WTC11 (cell line): ENCODE measurements at regions of chr17 and their contacts with region 1.

Region 1: DNA sequence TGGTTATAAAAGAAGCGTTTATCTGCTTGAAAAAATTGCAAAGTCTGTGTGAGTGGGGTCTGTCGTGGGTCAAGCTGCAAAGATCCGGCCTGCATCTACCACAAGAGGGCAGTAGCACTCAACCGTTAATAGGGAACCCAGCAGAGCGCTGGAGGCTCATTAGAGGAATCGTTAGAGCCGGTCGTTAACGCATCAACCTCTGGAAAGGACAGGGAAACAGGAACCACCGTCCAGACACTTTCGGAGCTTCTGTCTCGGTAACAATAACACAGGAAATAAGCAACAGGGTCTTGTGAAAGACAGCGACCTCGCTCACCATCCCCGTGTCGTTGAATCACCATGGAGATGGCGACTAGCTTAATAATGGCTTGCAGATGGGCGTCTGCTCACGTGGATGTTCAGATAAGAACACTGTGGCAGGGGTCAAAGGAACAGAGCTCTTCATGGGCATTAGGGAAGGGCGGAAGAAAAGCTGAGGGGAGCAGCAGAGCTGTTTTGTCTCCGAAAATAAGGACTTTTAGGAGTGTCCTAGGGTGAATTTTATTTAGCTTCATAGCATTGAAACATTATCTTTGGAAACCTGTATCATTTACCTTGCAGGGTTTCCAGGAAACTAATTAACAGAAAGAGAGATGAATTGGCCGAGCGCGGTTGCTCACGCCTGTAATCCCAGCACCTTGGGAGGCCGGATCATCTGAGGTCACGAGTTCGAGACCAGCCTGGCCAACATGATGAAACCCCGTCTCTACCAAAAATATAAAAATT is 11.9 kb upstream of the NSRP1 start:
- DNase-seq: peak; percentile 78
- ATAC-seq: peak; percentile 96
- H3K4me3 Mint-ChIP-seq: peak overlapping the region; percentile 72
- H3K27ac Mint-ChIP-seq: peak overlapping the region; percentile 79
- H3K4me1 Mint-ChIP-seq: peaks cover 5% of the 10 kb centered on the region; the same call in 1 of the 2 replicates
- H3K27me3 Mint-ChIP-seq: no peaks in the 10 kb centered on the region
- CTCF ChIP-seq: peak; percentile 61

Region 2: GRCh38 chr17:29883497-29883896 is 221.3 kb before region 1 on chr17:
- CTCF ChIA-PET with region 1: no interaction called
- POLR2A ChIA-PET with region 1: no interaction called
- DNase-seq: no peak
- ATAC-seq: no peak
- H3K4me3 Mint-ChIP-seq: no peak overlapping the region
- H3K27ac Mint-ChIP-seq: no peak overlapping the region
- H3K4me1 Mint-ChIP-seq: peaks cover 4% of the 10 kb centered on the region; the same call in 1 of the 2 replicates
- H3K27me3 Mint-ChIP-seq: no peaks in the 10 kb centered on the region
- CTCF ChIP-seq: no peak

Region 3: DNA sequence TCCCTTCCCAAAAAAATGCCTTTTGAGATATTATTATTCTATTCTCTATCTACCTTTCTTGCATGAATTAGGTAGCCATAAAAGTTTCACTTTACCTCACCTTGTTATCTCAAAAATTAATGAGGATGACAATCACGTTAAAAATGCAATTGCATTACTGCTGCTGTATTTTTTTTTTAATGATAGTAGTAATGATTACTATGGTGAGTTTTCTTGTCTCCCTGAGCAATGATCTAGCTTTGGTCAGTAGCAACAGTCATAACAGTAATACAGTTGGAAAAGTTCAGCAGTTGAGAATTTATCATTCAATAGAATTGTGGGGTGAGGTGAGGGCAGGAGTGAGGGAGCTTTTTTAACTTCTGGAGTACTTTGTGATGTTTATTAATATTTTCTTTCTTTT is 163.4 kb before region 1 on chr17 and contains the start of gene EFCAB5:
- CTCF ChIA-PET with region 1: no interaction called
- POLR2A ChIA-PET with region 1: no interaction called
- DNase-seq: no peak
- ATAC-seq: no peak
- H3K4me3 Mint-ChIP-seq: no peak within 1 kb of the TSS
- H3K27ac Mint-ChIP-seq: no peak within 1 kb of the TSS
- H3K4me1 Mint-ChIP-seq: no peaks in the 10 kb centered on the region
- H3K27me3 Mint-ChIP-seq: peaks cover 2% of the 10 kb centered on the region; the same call in 1 of the 2 replicates
- CTCF ChIP-seq: no peak
- total RNA-seq, gene EFCAB5: 0.32 to 0.59 TPM (median 0.55 TPM) in 3 replicates

Region 4: GRCh38 chr17:30124273-30124796 is 19.6 kb after region 1 on chr17:
- CTCF ChIA-PET with region 1: interaction called, 26 read pairs
- POLR2A ChIA-PET with region 1: no interaction called
- DNase-seq: no peak
- ATAC-seq: no peak
- H3K4me3 Mint-ChIP-seq: no peak overlapping the region
- H3K27ac Mint-ChIP-seq: peak overlapping the region; percentile 38
- H3K4me1 Mint-ChIP-seq: 0 out of 2 replicates have a peak, but pooled peaks cover 3% of the 10 kb centered on the region
- H3K27me3 Mint-ChIP-seq: no peaks in the 10 kb centered on the region
- CTCF ChIP-seq: no peak

Region 5: GRCh38 chr17:30203471-30203981 is 98.8 kb after region 1 on chr17:
- CTCF ChIA-PET with region 1: interaction called, 11 read pairs
- POLR2A ChIA-PET with region 1: no interaction called
- DNase-seq: peak; percentile 49
- ATAC-seq: peak; percentile 98
- H3K4me3 Mint-ChIP-seq: no peak overlapping the region
- H3K27ac Mint-ChIP-seq: no peak overlapping the region
- H3K4me1 Mint-ChIP-seq: 0 out of 2 replicates have a peak, but pooled peaks cover 4% of the 10 kb centered on the region
- H3K27me3 Mint-ChIP-seq: no peaks in the 10 kb centered on the region
- CTCF ChIP-seq: no peak

Region 6: DNA sequence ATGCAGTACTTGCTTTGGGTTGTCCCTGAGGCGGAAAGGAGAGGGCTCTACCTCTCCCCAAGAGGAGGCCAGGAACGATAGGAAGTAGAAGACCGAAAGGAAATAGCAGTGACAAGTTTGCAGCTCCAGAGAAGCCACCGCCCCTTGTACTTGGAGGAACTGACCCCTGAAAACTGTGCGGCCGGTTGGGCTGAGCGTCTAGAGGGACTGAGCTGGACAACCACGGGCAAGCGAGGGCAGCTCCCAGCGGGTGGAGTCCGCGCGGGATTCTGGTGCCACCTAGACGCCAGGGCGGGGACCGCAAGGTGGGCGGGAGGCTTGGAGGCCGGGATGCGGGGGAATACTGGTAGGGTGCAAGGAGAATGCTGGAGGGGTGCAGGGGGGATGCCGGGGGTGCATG is 132.0 kb after region 1 on chr17:
- CTCF ChIA-PET with region 1: interaction called, 33 read pairs
- POLR2A ChIA-PET with region 1: no interaction called
- DNase-seq: peak; percentile 75
- ATAC-seq: peak; percentile 11
- H3K4me3 Mint-ChIP-seq: peak overlapping the region; percentile 54
- H3K27ac Mint-ChIP-seq: no peak overlapping the region
- H3K4me1 Mint-ChIP-seq: peaks cover 28% of the 10 kb centered on the region
- H3K27me3 Mint-ChIP-seq: peaks cover 82% of the 10 kb centered on the region
- CTCF ChIP-seq: no peak

Region 7: GRCh38 chr17:30278032-30278431 is 173.3 kb after region 1 on chr17:
- CTCF ChIA-PET with region 1: interaction called, 14 read pairs
- POLR2A ChIA-PET with region 1: no interaction called
- DNase-seq: no peak
- ATAC-seq: no peak
- H3K4me3 Mint-ChIP-seq: no peak overlapping the region
- H3K27ac Mint-ChIP-seq: no peak overlapping the region
- H3K4me1 Mint-ChIP-seq: peaks cover 4% of the 10 kb centered on the region; the same call in 1 of the 2 replicates
- H3K27me3 Mint-ChIP-seq: no peaks in the 10 kb centered on the region
- CTCF ChIP-seq: no peak

Region 8: DNA sequence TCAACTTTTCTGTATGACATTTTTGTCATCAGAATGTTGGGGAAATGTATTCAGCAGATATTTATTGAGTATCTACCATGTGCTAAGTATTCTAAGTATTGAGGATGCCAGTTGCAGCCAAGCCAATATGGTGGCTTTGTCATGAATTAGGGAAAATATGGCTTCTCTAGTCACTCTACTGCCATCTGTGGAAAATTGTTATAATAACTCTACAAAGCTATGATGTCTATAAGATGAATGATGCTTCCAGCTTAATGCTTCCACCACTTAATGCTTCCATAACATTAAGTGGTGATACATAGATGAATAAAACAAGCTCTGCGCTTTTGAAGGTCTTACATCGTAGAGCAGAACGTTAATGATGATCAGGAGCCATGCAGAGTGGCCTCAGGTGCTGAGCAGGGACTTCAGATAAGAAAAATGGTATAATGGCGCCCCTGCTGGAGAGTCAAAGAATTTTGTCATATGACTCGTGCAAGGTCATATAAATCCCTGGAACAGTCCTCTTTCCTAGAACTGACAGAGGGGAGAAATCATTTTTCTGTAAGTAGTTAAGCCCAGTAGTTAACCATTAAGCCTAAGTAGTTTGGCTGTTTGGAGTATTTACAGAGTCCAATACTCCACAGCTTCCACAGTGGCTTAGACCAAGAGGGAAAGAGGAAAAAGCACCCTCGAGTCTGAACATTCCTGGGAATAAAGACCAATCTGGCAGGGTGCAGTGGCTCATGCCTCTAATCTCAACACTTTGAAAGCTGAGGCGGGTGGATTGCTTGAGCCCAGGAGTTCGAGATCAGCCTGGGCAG is 231.8 kb after region 1 on chr17:
- CTCF ChIA-PET with region 1: interaction called, 29 read pairs
- POLR2A ChIA-PET with region 1: no interaction called
- DNase-seq: peak; percentile 62
- ATAC-seq: peak; percentile 46
- H3K4me3 Mint-ChIP-seq: no peak overlapping the region
- H3K27ac Mint-ChIP-seq: no peak overlapping the region
- H3K4me1 Mint-ChIP-seq: peaks cover 14% of the 10 kb centered on the region
- H3K27me3 Mint-ChIP-seq: peaks cover 35% of the 10 kb centered on the region
- CTCF ChIP-seq: peak; percentile 70